Activated CD4-positive, alpha-beta T cell treated with anti-CD3 and anti-CD28 coated beads for 36 hours (primary cell): ENCODE measurements at regions of chr14 and their contacts with region 1.

Region 1: GRCh38 chr14:56422703-56423213 is 156.8 kb upstream of the TMEM260 start:
- DNase-seq: peak; percentile 24
- ATAC-seq: peak; percentile 53
- H3K4me3 Mint-ChIP-seq: no peak overlapping the region
- H3K27ac Mint-ChIP-seq: no peak overlapping the region
- H3K4me1 Mint-ChIP-seq: no peaks in the 10 kb centered on the region
- H3K27me3 Mint-ChIP-seq: peaks cover 2% of the 10 kb centered on the region

Region 2: GRCh38 chr14:55731881-55732498 is 690.8 kb before region 1 on chr14:
- CTCF ChIA-PET with region 1: interaction called, 7 read pairs
- POLR2A ChIA-PET with region 1: no interaction called
- intact Hi-C with region 1: loop called (anchors 1 to 2 kb)
- DNase-seq: peak; percentile 68
- ATAC-seq: no peak
- H3K4me3 Mint-ChIP-seq: no peak overlapping the region
- H3K27ac Mint-ChIP-seq: no peak overlapping the region
- H3K4me1 Mint-ChIP-seq: no peaks in the 10 kb centered on the region
- H3K27me3 Mint-ChIP-seq: no peaks in the 10 kb centered on the region